GM18951 (cell line): ENCODE measurements at regions of chr2 and their contacts with region 1.

Region 1: DNA sequence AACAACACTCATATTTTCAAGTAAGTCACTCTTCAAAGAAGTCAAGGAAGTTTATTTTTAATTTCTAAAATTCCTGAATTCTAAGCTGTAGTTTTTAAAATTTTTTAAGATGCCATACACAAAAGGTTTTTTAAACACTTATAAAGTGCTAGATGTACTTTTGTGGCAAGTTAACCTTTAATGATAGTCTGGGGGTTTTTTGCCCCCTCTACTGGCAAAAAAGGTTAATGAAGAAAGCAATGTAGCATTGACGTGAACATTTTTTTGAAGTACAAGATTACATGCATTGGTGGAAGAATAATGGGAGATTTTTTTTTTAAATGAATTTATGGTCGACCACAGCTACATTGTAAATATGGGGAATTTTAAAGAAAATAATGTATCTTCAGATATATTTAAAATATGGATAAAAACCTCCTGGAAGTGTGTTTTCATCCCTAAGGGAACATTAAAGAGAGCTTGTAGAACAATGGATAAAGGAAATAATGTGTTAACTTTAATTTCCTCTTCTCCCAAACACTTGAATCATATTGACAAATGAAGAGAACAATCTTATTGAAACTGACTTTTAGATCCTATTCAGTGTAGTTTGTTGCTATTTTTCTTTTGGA is 12.6 kb downstream of the ITPRID2 start:
- POLR2A ChIP-seq: no peak

Region 2: DNA sequence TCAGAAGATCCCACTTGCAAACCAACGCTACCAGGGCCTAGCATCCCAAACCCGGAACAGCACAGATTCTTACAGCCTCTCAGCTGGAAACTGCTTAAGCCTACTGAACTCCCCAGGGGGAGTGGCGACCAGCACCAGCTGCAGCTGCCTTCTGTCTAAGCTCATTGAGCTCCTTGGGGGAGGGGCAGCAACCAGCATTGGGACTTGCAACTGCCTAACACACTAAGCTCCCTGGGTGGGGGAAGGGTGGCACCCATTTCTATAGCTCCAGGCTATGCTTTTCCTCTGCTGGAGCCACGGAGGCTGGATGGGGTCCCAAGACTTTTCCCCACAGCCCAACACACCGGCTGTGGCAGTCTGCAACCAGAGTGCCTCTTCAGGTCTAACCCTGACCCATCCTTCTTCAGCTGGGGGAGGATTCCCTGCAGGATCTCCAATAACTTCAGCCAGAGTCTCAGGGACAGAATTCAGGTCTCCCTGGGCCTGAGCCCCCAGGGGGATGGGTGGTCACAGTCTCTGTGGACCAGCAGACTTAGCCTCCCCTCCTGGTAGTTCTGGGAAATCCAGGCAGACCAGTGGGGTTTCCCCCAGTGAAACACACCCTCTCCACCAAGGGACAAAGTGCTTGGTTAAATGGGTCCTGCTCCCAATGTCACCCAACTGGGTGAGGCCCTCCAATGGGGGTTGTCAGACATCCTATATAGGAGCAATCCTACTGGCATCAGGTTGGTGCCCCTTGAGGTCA is 492.9 kb before region 1 on chr2:
- in situ Hi-C with region 1: no loop called
- POLR2A ChIP-seq: no peak

Region 3: DNA sequence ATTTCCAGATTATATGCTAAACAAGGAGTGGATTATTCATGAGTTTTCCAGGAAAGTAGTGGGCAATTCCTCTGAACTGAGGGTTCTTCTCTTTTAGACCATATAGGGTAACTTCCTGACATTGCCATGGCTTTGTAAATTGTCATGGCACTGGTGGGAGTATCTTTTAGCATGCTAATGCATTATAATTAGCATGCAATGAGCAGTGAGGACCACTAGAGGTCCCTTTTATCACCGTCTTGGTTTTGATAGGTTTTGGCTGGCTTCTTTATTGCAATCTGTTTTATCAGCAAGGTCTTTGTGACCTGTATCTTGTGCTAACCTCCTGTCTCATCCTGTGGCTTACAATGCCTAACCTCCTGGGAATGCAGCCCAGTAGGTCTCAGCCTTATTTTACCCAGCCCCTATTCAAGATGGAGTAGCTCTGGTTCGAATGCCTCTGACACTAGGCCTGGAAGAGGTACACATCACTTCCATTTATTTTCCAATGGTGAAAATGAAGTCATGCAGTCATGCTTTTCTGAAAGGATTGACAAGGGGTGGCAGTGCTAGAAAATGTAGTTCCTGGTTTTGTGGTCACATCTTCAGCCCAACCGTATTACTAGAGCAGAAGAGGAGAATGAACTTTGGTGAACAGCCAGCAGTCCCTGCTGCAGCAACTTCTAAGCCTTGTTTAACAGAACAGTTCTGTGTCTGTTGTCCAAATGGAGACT is 473.6 kb before region 1 on chr2:
- in situ Hi-C with region 1: no loop called
- POLR2A ChIP-seq: no peak

Region 4: GRCh38 chr2:181742922-181743722 is 161.0 kb before region 1 on chr2:
- in situ Hi-C with region 1: loop called (anchors 10 kb)
- POLR2A ChIP-seq: no peak

Region 5: GRCh38 chr2:182318466-182319309 is 414.6 kb after region 1 on chr2:
- in situ Hi-C with region 1: no loop called
- POLR2A ChIP-seq: no peak